ENCODE measurements at regions of chr5 and their contacts with region 1.

Region 1: GRCh38 chr5:65624571-65625555 is at the starts of genes SHLD3 and TRAPPC13:
- DNase-seq: peak; percentile 89
- H3K4me3 Mint-ChIP-seq: peak within 1 kb of the TSS; percentile 85
- H3K27ac Mint-ChIP-seq: peak within 1 kb of the TSS; percentile 97
- H3K4me1 Mint-ChIP-seq: peaks cover 7% of the 10 kb centered on the region
- H3K27me3 Mint-ChIP-seq: no peaks in the 10 kb centered on the region
- CTCF ChIP-seq: no peak
- total RNA-seq, gene SHLD3: 3.0 and 3.7 TPM in 2 replicates
- total RNA-seq, gene TRAPPC13: 28.4 and 39.9 TPM in 2 replicates

Region 2: GRCh38 chr5:65562731-65563701 is 61.8 kb before region 1 on chr5 and contains the starts of genes CENPK and PPWD1:
- CTCF ChIA-PET with region 1: interaction called, 4 read pairs
- POLR2A ChIA-PET with region 1: interaction called, 38 read pairs
- intact Hi-C with region 1: no loop called
- DNase-seq: peak; percentile 96
- H3K4me3 Mint-ChIP-seq: peak within 1 kb of the TSS; percentile 90
- H3K27ac Mint-ChIP-seq: peak within 1 kb of the TSS; percentile 96
- H3K4me1 Mint-ChIP-seq: peaks cover 25% of the 10 kb centered on the region
- H3K27me3 Mint-ChIP-seq: no peaks in the 10 kb centered on the region
- CTCF ChIP-seq: no peak
- total RNA-seq, gene CENPK: 11.2 and 15.3 TPM in 2 replicates
- total RNA-seq, gene PPWD1: 32.7 and 43.3 TPM in 2 replicates

Region 3: GRCh38 chr5:65611524-65611923 is 13.3 kb before region 1 on chr5:
- CTCF ChIA-PET with region 1: no interaction called
- POLR2A ChIA-PET with region 1: interaction called, 26 read pairs
- intact Hi-C with region 1: no loop called
- DNase-seq: no peak
- H3K4me3 Mint-ChIP-seq: no peak overlapping the region
- H3K27ac Mint-ChIP-seq: no peak overlapping the region
- H3K4me1 Mint-ChIP-seq: no peaks in the 10 kb centered on the region
- H3K27me3 Mint-ChIP-seq: no peaks in the 10 kb centered on the region
- CTCF ChIP-seq: no peak

Measured in MCF 10A (cell line).